Activated CD4-positive, alpha-beta T cell treated with anti-CD3 and anti-CD28 coated beads, Interleukin-2, amount 10 ng/mL, durations not matched to agents 24 days and 14 days (primary cell): ENCODE measurements at regions of chr5 and their contacts with region 1.

Region 1: GRCh38 chr5:135364421-135365262 is 34.4 kb downstream of the MACROH2A1 start:
- DNase-seq: no peak
- H3K4me3 Mint-ChIP-seq: no peak overlapping the region
- H3K27ac Mint-ChIP-seq: peak overlapping the region; percentile 10
- H3K4me1 Mint-ChIP-seq: peaks cover 29% of the 10 kb centered on the region
- H3K27me3 Mint-ChIP-seq: no peaks in the 10 kb centered on the region

Region 2: DNA sequence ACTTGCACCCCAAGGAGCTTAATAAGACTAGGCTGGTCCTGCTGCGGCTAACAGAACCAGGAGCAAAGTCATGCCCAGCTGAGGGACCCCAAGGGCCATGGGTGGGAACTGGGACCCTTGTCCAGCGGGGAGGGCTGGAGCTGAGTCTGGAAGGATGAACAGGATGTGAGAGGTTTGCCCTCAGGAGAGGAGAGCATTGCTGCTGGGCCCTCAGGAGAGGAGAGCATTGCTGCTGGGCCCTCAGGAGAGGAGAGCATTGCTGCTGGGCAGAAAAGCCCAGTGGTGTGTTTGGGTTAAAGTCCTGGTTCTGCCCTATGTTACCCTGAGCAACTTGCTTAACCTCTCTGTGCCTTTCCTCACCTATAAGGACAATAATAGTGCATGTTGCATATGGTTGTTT is 91.4 kb before region 1 on chr5:
- intact Hi-C with region 1: no loop called
- DNase-seq: no peak
- H3K4me3 Mint-ChIP-seq: no peak overlapping the region
- H3K27ac Mint-ChIP-seq: no peak overlapping the region
- H3K4me1 Mint-ChIP-seq: no peaks in the 10 kb centered on the region
- H3K27me3 Mint-ChIP-seq: peaks cover 23% of the 10 kb centered on the region

Region 3: GRCh38 chr5:135398853-135399523 is 34.3 kb after region 1 on chr5 and contains the start of gene MACROH2A1:
- intact Hi-C with region 1: loop called (anchors 5 kb)
- DNase-seq: peak; percentile 96
- H3K4me3 Mint-ChIP-seq: peak within 1 kb of the TSS; percentile 90
- H3K27ac Mint-ChIP-seq: peak within 1 kb of the TSS; percentile 91
- H3K4me1 Mint-ChIP-seq: peaks cover 45% of the 10 kb centered on the region
- H3K27me3 Mint-ChIP-seq: no peaks in the 10 kb centered on the region
- total RNA-seq, gene MACROH2A1: 282 and 289 TPM in 2 replicates

Region 4: DNA sequence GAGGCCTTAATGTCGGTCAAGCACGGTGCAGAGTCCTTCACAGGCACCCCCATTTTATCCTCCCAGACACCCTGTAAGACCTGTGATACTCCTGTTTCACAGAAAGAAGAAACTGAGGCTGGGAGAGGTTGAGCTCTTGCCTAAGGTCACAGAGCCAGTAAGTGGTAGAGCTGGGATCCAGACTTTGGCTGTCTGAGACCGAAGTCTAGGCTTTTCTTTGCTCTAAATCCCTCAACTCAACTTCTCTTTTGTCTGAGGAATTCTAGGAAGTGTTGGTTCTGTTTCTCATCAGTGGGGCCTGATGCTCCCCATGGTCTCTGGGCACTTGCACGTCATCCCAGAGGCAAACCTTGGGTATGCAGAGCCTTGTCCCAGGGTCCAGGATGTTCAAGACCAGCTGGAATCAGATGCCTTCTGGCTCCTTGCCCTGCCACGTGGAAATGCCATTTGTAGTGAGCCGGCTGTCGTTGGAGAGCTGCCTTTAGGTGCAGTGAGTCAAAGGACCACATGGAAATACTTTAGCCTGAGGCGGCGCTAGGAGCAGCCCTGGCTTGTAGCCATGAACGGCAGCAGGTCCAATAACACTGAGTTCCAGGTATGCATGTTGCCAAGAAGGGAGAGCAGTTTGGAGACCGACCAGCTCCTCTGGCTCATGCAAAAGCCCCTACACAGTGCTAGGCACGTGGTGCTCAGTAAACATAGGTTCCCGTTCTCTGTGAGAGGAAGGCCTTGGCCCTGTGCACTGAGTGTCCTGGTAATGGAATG is 73.3 kb after region 1 on chr5:
- intact Hi-C with region 1: no loop called
- DNase-seq: no peak
- H3K4me3 Mint-ChIP-seq: no peak overlapping the region
- H3K27ac Mint-ChIP-seq: no peak overlapping the region
- H3K4me1 Mint-ChIP-seq: no peaks in the 10 kb centered on the region
- H3K27me3 Mint-ChIP-seq: peaks cover 18% of the 10 kb centered on the region